CD8-positive, alpha-beta T cell (primary cell): ENCODE measurements at regions of chr3 and their contacts with region 1.

Region 1: DNA sequence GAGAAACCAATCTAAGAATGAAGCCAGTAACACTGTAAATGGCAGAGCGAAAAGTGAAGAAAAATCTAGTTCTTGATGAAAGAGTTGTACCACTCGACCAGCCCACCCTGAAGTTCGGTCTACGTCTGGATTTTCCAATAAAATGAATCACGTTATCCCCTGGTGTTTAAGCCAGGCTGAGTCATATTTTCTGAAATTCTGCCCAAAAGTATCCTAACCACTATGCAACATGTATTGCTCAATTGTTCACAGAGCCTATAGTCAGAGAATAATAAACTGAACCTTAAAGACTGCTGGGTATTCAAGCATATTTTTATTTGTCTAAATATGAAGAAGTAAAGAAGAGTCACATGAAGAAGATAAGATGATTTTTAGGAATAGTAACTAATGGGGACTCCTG is 245.7 kb downstream of the FGF12 start:
- DNase-seq: no peak
- ATAC-seq: no peak
- H3K4me3 ChIP-seq: no peak overlapping the region
- H3K4me3 Mint-ChIP-seq: no peak overlapping the region
- H3K27ac ChIP-seq: no peak overlapping the region
- H3K27ac Mint-ChIP-seq: no peak overlapping the region
- H3K4me1 ChIP-seq: no peaks in the 10 kb centered on the region
- H3K4me1 Mint-ChIP-seq: no peaks in the 10 kb centered on the region
- H3K27me3 ChIP-seq: no peaks in the 10 kb centered on the region
- H3K27me3 Mint-ChIP-seq: no peaks in the 10 kb centered on the region
- CTCF ChIP-seq: no peak

Region 2: DNA sequence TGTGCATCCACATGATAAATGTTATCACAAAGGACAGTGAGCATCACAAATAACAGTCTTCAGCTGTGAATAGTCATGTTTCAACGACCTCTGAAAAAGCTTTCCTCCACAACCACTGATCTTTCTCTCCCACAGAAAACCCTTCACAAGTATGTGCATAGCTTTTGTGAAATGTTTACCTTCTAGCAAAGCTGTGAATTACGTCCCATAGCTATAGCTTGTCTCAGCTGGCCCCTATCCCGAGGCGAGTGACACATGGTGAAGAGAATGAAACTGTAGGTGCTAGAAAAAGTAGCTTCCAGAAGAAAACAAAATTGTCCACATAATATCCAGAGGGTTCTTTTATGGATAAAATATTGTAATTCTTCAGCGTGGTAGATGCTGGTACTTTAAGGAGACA is 63.7 kb after region 1 on chr3:
- CTCF ChIA-PET with region 1: no interaction called
- POLR2A ChIA-PET with region 1: no interaction called
- intact Hi-C with region 1: loop called in 1 of 2 experiments (anchors 10 kb)
- DNase-seq: no peak
- ATAC-seq: no peak
- H3K4me3 ChIP-seq: no peak overlapping the region
- H3K4me3 Mint-ChIP-seq: no peak overlapping the region
- H3K27ac ChIP-seq: no peak overlapping the region
- H3K27ac Mint-ChIP-seq: no peak overlapping the region
- H3K4me1 ChIP-seq: no peaks in the 10 kb centered on the region
- H3K4me1 Mint-ChIP-seq: no peaks in the 10 kb centered on the region
- H3K27me3 ChIP-seq: no peaks in the 10 kb centered on the region
- H3K27me3 Mint-ChIP-seq: no peaks in the 10 kb centered on the region
- CTCF ChIP-seq: no peak